Transverse colon (tissue), 4 donors: ENCODE measurements at regions of chr6 and their contacts with region 1.

Region 1: DNA sequence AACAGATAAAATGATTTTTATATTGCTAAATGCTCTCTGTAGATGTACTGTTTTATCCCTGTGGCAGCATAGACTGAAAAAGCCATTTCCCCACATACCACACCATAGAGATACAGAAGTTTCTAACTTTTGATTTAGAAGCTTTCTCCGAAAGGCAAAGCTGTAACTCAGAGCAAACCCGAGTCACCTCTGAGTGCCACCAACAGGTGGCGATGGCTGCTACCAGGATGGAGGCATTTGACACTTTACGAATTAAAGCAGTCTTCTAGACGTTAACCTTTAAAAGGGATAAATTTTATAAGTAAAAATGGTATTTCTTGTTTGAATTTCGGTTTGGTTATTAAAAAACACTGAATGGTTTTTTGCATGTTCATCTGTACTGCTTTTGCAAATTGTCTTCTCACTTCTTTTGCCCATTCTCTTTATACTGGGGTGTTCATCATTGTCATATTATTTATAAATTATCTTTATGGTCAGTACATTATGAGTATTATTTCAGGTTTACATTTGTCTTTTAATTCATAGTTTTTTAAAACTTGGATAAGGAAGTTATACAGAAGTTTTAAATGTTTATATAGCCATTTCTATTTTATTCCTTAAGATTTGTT is 201.0 kb upstream of the CEP162 start:
- DNase-seq: peak; percentile 11
- H3K4me3 ChIP-seq: no peak overlapping the region
- H3K27ac ChIP-seq: no peak overlapping the region
- H3K4me1 ChIP-seq: no peaks in the 10 kb centered on the region
- H3K27me3 ChIP-seq: peaks cover 10% of the 10 kb centered on the region
- CTCF ChIP-seq: peak; percentile 33 to 50 (median 48)
- EP300 ChIP-seq: no peak
- POLR2A ChIP-seq: no peak

Region 2: DNA sequence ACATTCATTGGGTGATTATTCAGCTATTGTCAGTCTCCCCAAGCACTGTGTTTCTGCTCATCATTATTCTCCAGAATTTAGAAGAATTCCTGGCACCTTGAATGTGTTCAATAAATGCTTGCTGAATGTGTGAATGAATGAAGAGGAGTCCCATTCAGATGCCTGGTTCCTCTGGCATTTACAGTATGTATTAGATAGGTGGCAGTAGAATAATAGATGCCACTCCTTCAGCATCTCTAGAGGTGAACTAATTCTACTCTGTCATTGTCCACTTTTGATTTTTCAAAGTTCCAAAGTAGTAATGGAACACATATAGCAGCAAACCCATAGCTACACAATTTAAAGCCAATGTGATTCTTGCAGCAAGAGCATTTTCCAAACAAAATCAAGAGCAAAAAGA is 82.0 kb before region 1 on chr6:
- in situ Hi-C with region 1: no loop called
- intact Hi-C with region 1: no loop called
- DNase-seq: no peak
- H3K4me3 ChIP-seq: no peak overlapping the region
- H3K27ac ChIP-seq: no peak overlapping the region
- H3K4me1 ChIP-seq: no peaks in the 10 kb centered on the region
- H3K27me3 ChIP-seq: no peaks in the 10 kb centered on the region
- CTCF ChIP-seq: no peak
- EP300 ChIP-seq: no peak
- POLR2A ChIP-seq: no peak

Region 3: DNA sequence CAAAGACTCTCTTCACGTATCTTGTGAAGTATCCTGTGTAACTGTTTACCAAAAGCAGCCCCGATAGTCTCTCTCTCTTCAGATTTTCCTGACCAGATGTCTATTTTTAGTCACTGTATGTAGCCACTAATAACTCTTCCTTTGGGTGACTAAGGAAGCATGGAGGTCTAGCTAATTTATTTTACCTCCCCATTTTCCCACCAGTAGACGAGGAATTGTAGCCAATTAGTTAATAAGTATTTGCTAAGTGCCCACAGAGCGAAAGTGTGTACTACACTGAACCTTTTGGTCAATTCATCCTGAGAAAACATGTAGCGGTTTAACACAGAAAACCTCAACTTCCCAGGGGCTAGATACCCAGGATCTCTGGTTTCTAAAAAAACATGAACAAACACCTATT is 155.4 kb after region 1 on chr6:
- in situ Hi-C with region 1: no loop called
- intact Hi-C with region 1: no loop called
- DNase-seq: no peak
- H3K4me3 ChIP-seq: no peak overlapping the region
- H3K27ac ChIP-seq: no peak overlapping the region
- H3K4me1 ChIP-seq: no peaks in the 10 kb centered on the region
- H3K27me3 ChIP-seq: no peaks in the 10 kb centered on the region
- CTCF ChIP-seq: no peak
- EP300 ChIP-seq: no peak
- POLR2A ChIP-seq: no peak

Region 4: GRCh38 chr6:84967389-84967788 is 539.0 kb after region 1 on chr6:
- in situ Hi-C with region 1: loop called in 1 of 4 experiments (anchors 25 kb)
- intact Hi-C with region 1: no loop called
- DNase-seq: no peak
- H3K4me3 ChIP-seq: no peak overlapping the region
- H3K27ac ChIP-seq: no peak overlapping the region
- H3K4me1 ChIP-seq: no peaks in the 10 kb centered on the region
- H3K27me3 ChIP-seq: no peaks in the 10 kb centered on the region
- CTCF ChIP-seq: peak in 1 of 5 experiments; percentile 16
- EP300 ChIP-seq: no peak
- POLR2A ChIP-seq: no peak

Region 5: DNA sequence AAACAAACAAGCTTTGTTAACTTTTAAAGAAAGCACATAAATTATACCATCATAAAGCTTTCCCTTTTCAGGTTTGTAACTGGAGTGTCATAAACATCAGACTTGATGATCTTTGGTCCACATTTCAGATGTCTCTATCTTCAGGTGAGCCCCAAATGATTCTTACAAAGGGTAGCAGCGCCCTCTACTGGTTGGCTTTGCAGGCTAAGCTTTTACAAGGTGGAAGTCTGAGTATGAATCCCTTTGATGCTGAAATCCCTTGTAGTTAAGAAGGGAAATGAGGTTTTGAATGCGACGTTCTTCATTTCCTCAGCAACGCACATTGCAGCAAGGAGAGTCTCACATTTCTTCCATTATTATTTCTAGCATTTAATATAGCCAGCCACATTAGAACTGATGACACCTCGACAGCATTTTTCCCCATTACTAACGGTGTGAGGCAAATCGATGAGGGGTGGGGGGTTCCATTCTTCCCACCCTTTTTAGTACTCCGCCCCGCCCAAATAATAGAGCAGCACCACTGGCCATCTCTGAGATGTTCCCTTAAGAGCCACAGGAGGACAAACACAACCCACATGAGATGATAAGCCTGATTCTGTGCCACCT is 895.1 kb after region 1 on chr6:
- in situ Hi-C with region 1: loop called in 2 of 4 experiments (anchors 10 to 25 kb)
- intact Hi-C with region 1: no loop called
- DNase-seq: peak; percentile 80
- H3K4me3 ChIP-seq: no peak overlapping the region
- H3K27ac ChIP-seq: no peak overlapping the region
- H3K4me1 ChIP-seq: no peaks in the 10 kb centered on the region
- H3K27me3 ChIP-seq: peaks cover 5% of the 10 kb centered on the region
- CTCF ChIP-seq: peak; percentile 67 to 80 (median 69)
- EP300 ChIP-seq: no peak
- POLR2A ChIP-seq: no peak